ENCODE measurements at regions of chr16 and their contacts with region 1.

Region 1: DNA sequence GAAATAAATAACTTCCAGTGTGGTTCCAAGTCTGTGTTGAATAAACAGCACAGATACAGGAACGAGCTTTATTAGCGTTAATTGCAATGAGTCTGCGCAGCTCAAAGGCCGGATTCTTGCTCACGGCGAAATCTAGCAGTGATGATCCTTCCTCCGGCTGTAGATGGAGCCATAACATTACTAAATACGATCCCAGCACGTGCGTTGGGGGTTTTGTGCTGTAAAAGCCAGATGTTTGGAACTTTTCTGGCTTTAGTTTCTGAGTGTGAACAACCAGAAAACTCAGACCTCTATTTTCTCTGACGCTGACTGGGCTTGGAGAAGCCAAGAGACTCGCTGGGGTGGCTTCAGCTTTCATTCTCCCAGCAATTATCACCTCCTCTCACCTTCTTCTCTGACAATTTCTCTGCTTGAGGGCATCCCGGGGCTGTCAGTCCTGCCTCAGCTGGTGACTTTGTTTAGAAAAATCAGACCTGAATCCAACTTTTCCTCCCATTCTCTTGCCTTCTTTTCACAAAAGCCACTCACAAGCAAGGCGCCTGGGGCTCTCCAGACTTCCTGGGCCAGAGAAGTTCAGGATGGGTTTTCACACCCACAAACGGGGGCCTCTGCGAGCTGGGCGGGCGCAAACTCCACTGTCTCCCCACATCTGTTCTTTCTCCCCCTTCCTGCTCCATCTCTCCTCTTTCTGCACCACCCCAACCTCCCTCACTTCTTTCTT is 47.1 kb upstream of the AKTIP start:
- DNase-seq: peak; percentile 83
- H3K4me3 ChIP-seq: no peak overlapping the region
- H3K27ac ChIP-seq: no peak overlapping the region
- H3K4me1 ChIP-seq: peaks cover 3% of the 10 kb centered on the region
- H3K27me3 ChIP-seq: peaks cover 5 to 6% of the 10 kb centered on the region in 2 experiments
- CTCF ChIP-seq: peak; percentile 69 to 88
- POLR2A ChIP-seq: no peak

Region 2: GRCh38 chr16:53503270-53503923 is 46.7 kb before region 1 on chr16:
- CTCF ChIA-PET with region 1: interaction called, 13 read pairs
- POLR2A ChIA-PET with region 1: no interaction called
- dilution Hi-C with region 1: no loop called
- intact Hi-C with region 1: no loop called
- DNase-seq: peak; percentile 100
- H3K4me3 ChIP-seq: peak overlapping the region in 2 of 3 experiments; percentile 24 to 97
- H3K27ac ChIP-seq: peak overlapping the region; percentile 92
- H3K4me1 ChIP-seq: peaks cover 29% of the 10 kb centered on the region
- H3K27me3 ChIP-seq: no peaks in the 10 kb centered on the region
- CTCF ChIP-seq: no peak
- POLR2A ChIP-seq: peak; percentile 85

Region 3: GRCh38 chr16:53518550-53519416 is 31.3 kb before region 1 on chr16:
- CTCF ChIA-PET with region 1: interaction called, 12 read pairs
- POLR2A ChIA-PET with region 1: no interaction called
- dilution Hi-C with region 1: no loop called
- intact Hi-C with region 1: loop called (anchors 1 kb)
- DNase-seq: peak; percentile 92
- H3K4me3 ChIP-seq: peak overlapping the region in 1 of 3 experiments; percentile 51
- H3K27ac ChIP-seq: peak overlapping the region; percentile 97
- H3K4me1 ChIP-seq: peaks cover 39% of the 10 kb centered on the region
- H3K27me3 ChIP-seq: no peaks in the 10 kb centered on the region
- CTCF ChIP-seq: no peak
- POLR2A ChIP-seq: peak; percentile 73

Region 4: GRCh38 chr16:53892155-53892554 is 342.0 kb after region 1 on chr16:
- CTCF ChIA-PET with region 1: interaction called, 15 read pairs
- POLR2A ChIA-PET with region 1: no interaction called
- dilution Hi-C with region 1: no loop called
- intact Hi-C with region 1: loop called (anchors 1 kb)
- DNase-seq: peak; percentile 72
- H3K4me3 ChIP-seq: no peak overlapping the region
- H3K27ac ChIP-seq: no peak overlapping the region
- H3K4me1 ChIP-seq: peaks cover 23% of the 10 kb centered on the region
- H3K27me3 ChIP-seq: no peaks in the 10 kb centered on the region
- CTCF ChIP-seq: peak; percentile 57 to 66
- POLR2A ChIP-seq: no peak

Region 5: GRCh38 chr16:53968454-53968853 is 418.3 kb after region 1 on chr16:
- CTCF ChIA-PET with region 1: no interaction called
- POLR2A ChIA-PET with region 1: no interaction called
- dilution Hi-C with region 1: no loop called
- intact Hi-C with region 1: no loop called
- DNase-seq: no peak
- H3K4me3 ChIP-seq: no peak overlapping the region
- H3K27ac ChIP-seq: no peak overlapping the region
- H3K4me1 ChIP-seq: no peaks in the 10 kb centered on the region
- H3K27me3 ChIP-seq: no peaks in the 10 kb centered on the region
- CTCF ChIP-seq: no peak
- POLR2A ChIP-seq: no peak

Region 6: DNA sequence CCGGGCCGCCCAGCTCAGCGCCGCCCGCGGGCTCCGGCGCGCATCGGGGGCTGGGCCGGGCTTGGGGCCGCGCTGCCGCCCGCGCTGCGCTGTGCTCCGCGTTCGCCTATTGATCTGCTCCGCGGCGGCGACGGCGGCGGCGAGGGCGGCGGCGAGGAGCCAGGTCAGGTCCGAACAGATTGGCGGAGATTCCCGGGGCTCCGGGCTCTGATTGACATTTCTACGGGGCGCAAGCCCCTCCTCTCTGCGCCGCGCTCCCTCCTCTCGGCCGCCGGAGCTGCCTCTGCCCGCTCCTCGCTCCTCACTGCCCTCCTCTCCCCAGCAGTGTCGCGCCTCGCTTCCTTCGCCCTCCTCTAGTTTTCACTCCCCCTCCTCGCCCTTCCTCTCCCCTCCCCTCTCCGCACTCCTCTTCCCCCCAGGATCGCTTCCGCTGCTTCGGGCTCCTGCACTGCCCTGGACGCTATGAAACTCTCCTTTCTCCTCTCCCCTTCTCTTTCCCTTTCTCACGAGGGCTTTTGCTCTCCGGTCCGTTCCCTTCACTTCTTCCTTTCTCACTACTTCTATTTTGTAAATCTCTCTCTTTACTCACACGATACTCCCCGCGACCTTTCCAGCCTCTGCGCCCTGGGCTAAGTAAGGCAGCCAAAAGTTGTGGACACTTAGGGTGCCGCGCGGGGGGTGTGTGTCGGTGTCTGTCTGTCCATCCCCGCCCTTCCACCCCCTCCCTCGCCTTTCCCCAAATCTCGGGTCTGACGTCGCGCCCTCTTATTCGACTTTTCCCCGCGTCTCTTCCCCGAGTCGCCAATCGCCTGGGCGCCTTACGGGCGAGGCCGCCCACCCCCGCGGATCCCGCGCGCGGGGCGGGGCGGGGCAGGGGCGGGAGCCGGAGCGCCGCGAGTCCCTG is 736.2 kb after region 1 on chr16 and contains the start of gene IRX3:
- CTCF ChIA-PET with region 1: interaction called, 6 read pairs
- POLR2A ChIA-PET with region 1: no interaction called
- dilution Hi-C with region 1: no loop called
- intact Hi-C with region 1: loop called (anchors 2 kb)
- DNase-seq: peak; percentile 22
- H3K4me3 ChIP-seq: peak within 1 kb of the TSS; percentile 37 to 50 (median 42)
- H3K27ac ChIP-seq: no peak within 1 kb of the TSS
- H3K4me1 ChIP-seq: peaks cover 8% of the 10 kb centered on the region
- H3K27me3 ChIP-seq: peaks cover 76 to 94% of the 10 kb centered on the region in 2 experiments
- CTCF ChIP-seq: no peak
- POLR2A ChIP-seq: no peak
- total RNA-seq, gene IRX3: not detected in 2 replicates

Region 7: DNA sequence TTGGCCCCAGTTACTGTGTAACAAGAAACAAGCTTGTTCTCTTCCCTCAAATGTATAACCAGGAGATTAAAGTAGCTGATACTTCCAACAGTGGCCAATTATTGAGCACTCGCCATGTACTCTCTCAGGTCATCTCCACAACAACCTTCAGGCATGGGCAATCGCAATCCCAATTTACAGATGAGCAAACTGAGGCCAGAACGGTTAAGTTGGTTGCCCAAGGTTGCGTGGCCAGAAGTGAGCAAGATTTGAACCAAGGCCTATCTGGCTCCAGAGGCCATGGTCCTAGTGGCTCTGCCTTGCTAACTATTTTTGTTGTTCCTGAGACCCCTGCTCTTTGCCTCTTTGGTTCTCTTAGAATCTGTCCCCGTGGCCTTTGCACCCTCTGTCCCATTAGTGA is 1414.1 kb after region 1 on chr16:
- CTCF ChIA-PET with region 1: no interaction called
- POLR2A ChIA-PET with region 1: no interaction called
- dilution Hi-C with region 1: no loop called
- intact Hi-C with region 1: no loop called
- DNase-seq: no peak
- H3K4me3 ChIP-seq: no peak overlapping the region
- H3K27ac ChIP-seq: no peak overlapping the region
- H3K4me1 ChIP-seq: no peaks in the 10 kb centered on the region
- H3K27me3 ChIP-seq: no peaks in the 10 kb centered on the region
- CTCF ChIP-seq: no peak
- POLR2A ChIP-seq: no peak

Region 8: DNA sequence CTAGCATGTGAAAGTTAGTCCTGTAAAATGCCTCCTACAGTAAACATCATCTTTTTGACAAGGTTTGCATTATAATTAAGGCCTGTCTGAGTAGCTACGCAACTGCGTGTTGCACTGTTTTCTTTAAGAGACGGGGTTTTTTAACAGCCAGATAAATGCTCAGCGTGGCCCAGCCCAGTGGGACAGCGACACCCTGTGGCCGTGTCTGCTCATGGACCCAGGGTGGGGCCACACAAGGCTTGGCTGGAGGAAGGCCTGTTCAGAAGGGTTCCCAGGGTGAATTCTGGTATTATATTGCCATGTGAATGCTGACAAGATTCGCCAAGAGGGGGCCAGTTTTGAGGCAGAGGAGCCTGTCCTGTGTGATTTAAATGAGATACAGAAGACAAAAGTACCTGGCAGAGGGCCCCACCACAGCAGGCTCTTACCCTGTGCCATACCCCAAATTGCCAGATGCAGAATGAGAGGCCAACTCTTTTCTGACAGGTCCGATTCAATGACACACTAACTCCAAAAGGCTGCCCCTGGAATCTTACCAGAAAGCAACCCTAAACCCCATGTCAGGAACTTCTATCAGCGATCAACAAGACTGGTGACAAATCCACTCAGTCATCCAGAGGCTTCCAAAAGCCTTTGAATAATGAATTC is 1708.0 kb after region 1 on chr16:
- CTCF ChIA-PET with region 1: interaction called, 31 read pairs
- POLR2A ChIA-PET with region 1: no interaction called
- dilution Hi-C with region 1: no loop called
- intact Hi-C with region 1: loop called (anchors 1 kb)
- DNase-seq: peak; percentile 53
- H3K4me3 ChIP-seq: no peak overlapping the region
- H3K27ac ChIP-seq: no peak overlapping the region
- H3K4me1 ChIP-seq: no peaks in the 10 kb centered on the region
- H3K27me3 ChIP-seq: no peaks in the 10 kb centered on the region
- CTCF ChIP-seq: peak; percentile 74 to 76
- POLR2A ChIP-seq: no peak

Measured in endothelial cell of umbilical vein (primary cell).